ENCODE measurements at regions of chr19 and their contacts with region 1.

Region 1: DNA sequence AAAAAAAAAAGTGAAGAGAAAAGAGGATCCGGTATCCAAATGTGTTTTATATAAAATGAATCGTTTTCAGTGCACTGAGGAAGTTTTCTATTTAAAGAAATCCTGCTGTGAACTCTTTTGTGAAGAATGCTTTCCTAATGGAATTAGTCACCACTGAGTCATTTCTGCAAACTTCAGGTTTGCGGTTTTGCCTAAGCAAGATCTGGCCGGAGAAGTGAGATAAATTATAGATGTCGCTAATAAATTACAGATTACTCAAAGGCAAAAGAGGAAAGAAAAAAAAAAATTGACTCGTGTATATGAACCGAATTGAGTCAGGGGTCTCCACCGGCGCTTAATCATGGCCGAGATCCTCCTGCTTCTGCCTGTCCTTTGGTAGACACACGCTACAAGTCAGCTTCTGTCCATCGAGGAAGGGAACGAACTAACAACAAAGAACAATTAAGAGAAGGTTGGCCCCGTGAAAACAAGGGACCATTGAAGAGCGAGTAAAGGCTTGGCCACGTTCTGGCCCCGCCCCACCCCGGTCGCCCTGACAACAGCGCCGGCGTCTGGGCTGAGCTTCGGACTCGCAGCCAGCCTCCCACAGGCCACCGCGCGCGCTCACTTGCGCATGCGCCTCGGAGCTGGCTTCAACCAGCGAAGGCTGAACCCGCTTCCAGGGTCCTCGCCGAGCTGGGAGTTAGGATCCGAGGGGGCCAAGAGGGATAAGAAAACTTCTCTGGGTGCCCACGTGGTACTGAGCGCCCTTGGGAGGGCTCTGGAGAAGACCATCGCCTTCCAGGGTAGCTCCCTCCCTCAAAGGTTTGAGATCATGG is 33.0 kb upstream of the MRI1 start:
- DNase-seq: peak; percentile 79
- ATAC-seq: peak; percentile 100
- H3K4me3 ChIP-seq: peak overlapping the region; percentile 65 to 89
- H3K27ac ChIP-seq: peak overlapping the region; percentile 94
- H3K4me1 ChIP-seq: peaks cover 13% of the 10 kb centered on the region; the same call in 1 of the 2 replicates
- H3K27me3 ChIP-seq: no peaks in the 10 kb centered on the region
- CTCF ChIP-seq: no peak

Region 2: DNA sequence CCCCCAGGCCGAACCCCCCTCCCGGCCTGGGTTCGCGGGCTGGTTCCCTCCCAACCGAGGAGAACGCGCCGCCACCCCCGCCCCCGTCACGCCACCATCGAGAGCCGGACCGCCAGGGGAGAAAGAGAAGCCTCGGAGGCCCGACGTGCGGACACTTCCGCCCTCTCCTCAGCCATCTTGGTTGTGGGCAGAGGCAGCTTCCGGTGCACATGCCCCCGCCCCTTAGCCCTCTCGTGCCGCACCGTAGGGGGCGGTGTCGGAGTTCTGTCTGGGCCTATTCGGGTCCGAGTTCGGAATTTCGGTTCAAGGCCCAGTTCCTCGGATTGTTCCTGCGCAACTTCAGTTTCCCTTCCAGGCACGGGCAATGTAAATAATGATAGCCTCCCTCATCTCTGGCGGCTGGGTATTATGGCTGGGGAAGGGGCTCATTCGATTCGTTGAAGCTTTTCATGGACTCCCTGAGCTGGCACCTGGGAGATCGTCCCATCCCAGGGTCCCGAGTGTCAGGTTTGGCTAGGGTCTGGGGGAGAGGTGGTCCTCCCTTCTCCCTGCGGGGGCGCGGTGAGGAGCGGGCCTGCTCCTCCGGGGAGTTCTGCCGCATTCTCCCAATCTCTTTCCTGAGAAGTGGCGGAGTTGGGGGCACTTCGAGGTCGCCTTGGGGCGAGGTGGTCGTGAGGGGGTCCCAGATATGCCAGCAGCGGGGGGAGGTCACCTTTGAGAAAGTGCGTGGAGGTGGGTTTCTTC is 581.0 kb before region 1 on chr19 and contains the starts of genes IER2 and STX10:
- CTCF ChIA-PET with region 1: no interaction called
- POLR2A ChIA-PET with region 1: interaction called, 11 read pairs
- in situ Hi-C with region 1: no loop called
- intact Hi-C with region 1: no loop called
- DNase-seq: no peak
- ATAC-seq: peak; percentile 67
- H3K4me3 ChIP-seq: peak within 1 kb of the TSS; percentile 83 to 93
- H3K27ac ChIP-seq: peak within 1 kb of the TSS; percentile 96
- H3K4me1 ChIP-seq: no peaks in the 10 kb centered on the region
- H3K27me3 ChIP-seq: no peaks in the 10 kb centered on the region
- CTCF ChIP-seq: no peak; the same call in 1 of the 2 replicates
- total RNA-seq, gene IER2: 80.4 TPM
- total RNA-seq, gene STX10: 43.6 TPM

Region 3: DNA sequence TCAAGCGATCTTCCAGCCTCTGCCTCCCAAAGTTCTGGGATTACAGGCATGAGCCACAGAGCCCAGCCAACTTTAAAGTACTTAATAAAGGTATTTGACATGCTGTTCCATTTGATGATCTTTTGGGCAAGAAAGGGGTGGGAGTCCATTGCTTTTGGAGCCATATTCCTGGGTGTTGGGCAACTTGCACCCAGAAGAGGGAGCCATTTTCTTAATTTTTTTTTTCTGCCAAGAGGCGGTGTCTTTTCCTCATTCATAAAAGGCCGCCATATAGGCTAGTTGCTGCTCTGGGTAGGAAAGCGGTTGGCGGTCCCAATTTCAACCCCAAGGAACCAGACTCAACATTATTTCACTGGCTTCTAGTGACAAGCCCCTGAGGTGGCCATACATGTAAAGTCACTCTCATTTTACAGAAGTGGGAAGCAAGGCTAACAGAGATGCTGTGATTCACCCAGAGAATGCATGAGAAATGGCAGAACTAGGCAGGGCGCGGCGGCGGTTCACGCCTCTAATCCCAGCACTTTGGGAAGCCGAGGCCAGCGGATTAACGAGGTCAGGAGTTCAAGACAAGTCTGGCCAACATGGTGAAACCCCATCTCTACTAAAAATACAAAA is 364.7 kb before region 1 on chr19:
- CTCF ChIA-PET with region 1: interaction called, 11 read pairs
- POLR2A ChIA-PET with region 1: no interaction called
- in situ Hi-C with region 1: no loop called
- intact Hi-C with region 1: no loop called
- DNase-seq: no peak
- ATAC-seq: peak; percentile 34; the same call in 1 of the 2 replicates
- H3K4me3 ChIP-seq: no peak overlapping the region
- H3K27ac ChIP-seq: no peak overlapping the region
- H3K4me1 ChIP-seq: no peaks in the 10 kb centered on the region
- H3K27me3 ChIP-seq: no peaks in the 10 kb centered on the region
- CTCF ChIP-seq: peak; percentile 68

Region 4: GRCh38 chr19:13492128-13492527 is 239.2 kb before region 1 on chr19:
- CTCF ChIA-PET with region 1: no interaction called
- POLR2A ChIA-PET with region 1: no interaction called
- in situ Hi-C with region 1: no loop called
- intact Hi-C with region 1: no loop called
- DNase-seq: no peak
- ATAC-seq: no peak
- H3K4me3 ChIP-seq: no peak overlapping the region
- H3K27ac ChIP-seq: no peak overlapping the region
- H3K4me1 ChIP-seq: no peaks in the 10 kb centered on the region
- H3K27me3 ChIP-seq: peaks cover 3% of the 10 kb centered on the region; the same call in 1 of the 2 replicates
- CTCF ChIP-seq: no peak

Region 5: GRCh38 chr19:13665125-13665905 is 66.0 kb before region 1 on chr19:
- CTCF ChIA-PET with region 1: no interaction called
- POLR2A ChIA-PET with region 1: no interaction called
- in situ Hi-C with region 1: no loop called
- intact Hi-C with region 1: no loop called
- DNase-seq: no peak
- ATAC-seq: no peak
- H3K4me3 ChIP-seq: no peak overlapping the region
- H3K27ac ChIP-seq: no peak overlapping the region
- H3K4me1 ChIP-seq: no peaks in the 10 kb centered on the region
- H3K27me3 ChIP-seq: no peaks in the 10 kb centered on the region
- CTCF ChIP-seq: no peak

Region 6: DNA sequence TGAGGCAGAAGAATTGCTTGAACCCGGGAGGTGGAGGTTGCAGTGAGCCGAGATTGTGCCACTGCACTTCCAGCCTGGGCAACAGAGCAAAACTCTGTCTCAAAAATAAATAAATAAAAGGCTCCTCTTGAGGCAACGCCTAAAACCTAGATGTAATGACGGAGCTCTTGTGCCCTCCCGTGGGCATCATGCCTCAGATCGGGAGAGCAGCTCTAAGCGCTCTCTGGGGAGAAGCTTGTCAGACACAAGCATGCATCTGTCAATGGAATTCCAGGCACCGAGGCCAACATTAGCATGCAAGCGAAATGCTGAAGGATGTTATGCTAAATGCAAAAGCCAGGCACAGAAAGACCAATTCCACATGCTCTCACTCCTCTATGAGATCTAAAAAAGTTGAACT is 12.6 kb before region 1 on chr19:
- CTCF ChIA-PET with region 1: interaction called, 15 read pairs
- POLR2A ChIA-PET with region 1: no interaction called
- in situ Hi-C with region 1: no loop called
- intact Hi-C with region 1: no loop called
- DNase-seq: no peak
- ATAC-seq: peak; percentile 89
- H3K4me3 ChIP-seq: no peak overlapping the region
- H3K27ac ChIP-seq: peak overlapping the region; percentile 67
- H3K4me1 ChIP-seq: peaks cover 9% of the 10 kb centered on the region; the same call in 1 of the 2 replicates
- H3K27me3 ChIP-seq: no peaks in the 10 kb centered on the region
- CTCF ChIP-seq: peak; percentile 73

Region 7: DNA sequence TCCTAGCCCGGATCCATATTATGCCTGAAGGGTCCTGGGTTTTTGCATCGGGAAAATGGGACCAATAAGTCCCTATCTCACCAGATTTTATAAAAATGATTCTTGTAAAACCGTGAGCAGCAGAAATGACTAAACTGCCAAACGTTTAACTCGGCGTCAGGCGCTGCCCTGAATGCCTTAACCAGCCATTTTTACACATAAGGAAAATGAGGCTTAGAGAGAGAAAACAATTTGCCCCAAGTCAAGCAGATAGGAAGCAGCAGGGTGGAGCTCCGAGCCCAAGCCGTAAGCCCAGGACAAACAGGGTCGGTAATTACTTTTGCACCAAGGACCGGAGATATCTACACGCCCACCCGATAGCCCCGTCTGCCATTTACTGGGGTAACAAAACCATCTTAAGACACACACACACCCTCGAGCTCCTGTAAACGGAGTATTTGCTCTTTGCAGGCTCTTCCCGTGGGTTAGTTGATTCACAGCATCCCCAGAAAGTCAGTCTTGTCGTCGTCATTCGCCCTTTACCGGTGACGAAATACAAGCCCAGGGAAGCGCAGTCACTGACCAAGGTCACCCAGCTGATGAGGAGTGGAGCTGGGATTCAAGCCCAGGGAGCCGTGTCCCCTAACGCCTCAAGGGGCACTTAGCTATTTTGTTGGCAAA is 16.9 kb after region 1 on chr19:
- CTCF ChIA-PET with region 1: interaction called, 4 read pairs
- POLR2A ChIA-PET with region 1: interaction called, 13 read pairs
- in situ Hi-C with region 1: no loop called
- intact Hi-C with region 1: no loop called
- DNase-seq: no peak
- ATAC-seq: peak; percentile 7; the same call in 1 of the 2 replicates
- H3K4me3 ChIP-seq: peak overlapping the region; percentile 90
- H3K27ac ChIP-seq: peak overlapping the region; percentile 97
- H3K4me1 ChIP-seq: no peaks in the 10 kb centered on the region; the same call in 1 of the 2 replicates
- H3K27me3 ChIP-seq: no peaks in the 10 kb centered on the region
- CTCF ChIP-seq: no peak

Region 8: DNA sequence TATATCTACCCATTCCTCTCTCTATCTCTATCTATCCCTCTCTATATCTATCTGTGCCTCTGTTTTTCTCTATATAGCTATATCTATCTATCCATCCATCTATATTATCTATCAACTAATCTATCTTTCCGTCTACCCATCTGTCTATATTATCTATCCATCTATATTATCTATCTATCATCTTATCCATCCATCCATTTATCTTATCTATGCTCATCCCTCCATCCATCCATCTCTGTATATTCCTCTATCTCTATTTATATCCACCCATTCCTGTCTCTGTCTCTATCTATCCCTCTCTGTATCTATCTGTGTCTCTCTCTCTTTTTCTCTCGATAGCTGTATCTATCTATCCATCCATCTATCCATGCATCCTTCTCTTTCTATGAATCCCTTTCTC is 729.6 kb after region 1 on chr19:
- CTCF ChIA-PET with region 1: no interaction called
- POLR2A ChIA-PET with region 1: interaction called, 11 read pairs
- in situ Hi-C with region 1: no loop called
- intact Hi-C with region 1: no loop called
- DNase-seq: no peak
- ATAC-seq: no peak
- H3K4me3 ChIP-seq: no peak overlapping the region
- H3K27ac ChIP-seq: no peak overlapping the region
- H3K4me1 ChIP-seq: no peaks in the 10 kb centered on the region
- H3K27me3 ChIP-seq: no peaks in the 10 kb centered on the region
- CTCF ChIP-seq: no peak

Measured in Panc1 (cell line).